HepG2 (cell line): ENCODE measurements at regions of chr4 and their contacts with region 1.

Region 1: GRCh38 chr4:7067452-7068278 is at the start of gene GRPEL1:
- DNase-seq: peak; percentile 99
- ATAC-seq: peak; percentile 94
- H3K4me3 ChIP-seq: peak within 1 kb of the TSS; percentile 79 to 97 (median 85)
- H3K27ac ChIP-seq: peak within 1 kb of the TSS; percentile 91
- H3K4me1 ChIP-seq: peaks cover 60% of the 10 kb centered on the region
- H3K27me3 ChIP-seq: no peaks in the 10 kb centered on the region; a peak in 1 of 5 replicates
- CTCF ChIP-seq: no peak
- EP300 ChIP-seq: 0 out of 4 replicates have a peak, but pooled peaks of 1 of the 2 experiments have one; percentile 13
- POLR2A ChIP-seq: peak in 1 of 2 experiments; percentile 99; a peak in 2 of 4 replicates
- RAD21 ChIP-seq: peak; percentile 19; the same call in 1 of the 2 replicates
- total RNA-seq, gene GRPEL1: 141 and 213 TPM in 2 replicates

Region 2: DNA sequence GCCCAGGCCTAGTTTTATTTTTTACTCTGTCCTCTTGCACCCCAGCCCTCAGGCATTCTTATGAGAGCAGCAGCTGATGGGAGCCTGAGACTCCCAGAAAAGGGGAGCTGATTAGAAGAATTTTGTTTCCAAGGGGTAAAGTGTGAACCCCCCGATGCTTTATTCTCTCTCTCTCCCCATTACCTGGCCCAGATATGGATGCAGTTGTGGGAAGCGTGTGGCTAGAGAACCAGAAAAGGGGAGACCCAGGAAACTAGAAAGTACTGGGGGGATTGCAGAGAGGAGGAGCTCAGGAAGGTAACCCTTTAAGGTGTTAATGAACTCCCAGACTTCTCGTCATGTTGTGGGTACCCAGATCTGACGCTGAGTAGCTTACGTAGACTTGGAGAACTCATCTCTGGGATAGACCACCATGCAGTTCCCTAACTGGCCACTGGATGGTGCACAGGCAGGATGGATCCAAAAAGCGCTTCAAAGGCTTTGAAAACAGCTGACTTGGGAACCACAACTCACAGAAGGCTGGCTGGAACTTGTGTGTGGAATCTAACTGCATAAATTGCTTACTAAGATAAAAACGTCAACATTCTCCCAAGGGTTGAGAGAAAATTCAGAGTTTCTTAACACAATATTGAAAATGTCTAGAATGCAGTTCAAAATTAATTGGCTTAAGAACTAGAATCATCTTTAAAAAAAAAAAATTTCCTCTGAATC is 93.4 kb before region 1 on chr4:
- CTCF ChIA-PET with region 1: interaction called, 6 read pairs
- POLR2A ChIA-PET with region 1: no interaction called
- in situ Hi-C with region 1: no loop called
- intact Hi-C with region 1: loop called (anchors 1 kb)
- DNase-seq: peak; percentile 81
- ATAC-seq: peak; percentile 94
- H3K4me3 ChIP-seq: no peak overlapping the region
- H3K27ac ChIP-seq: no peak overlapping the region
- H3K4me1 ChIP-seq: peaks cover 16% of the 10 kb centered on the region
- H3K27me3 ChIP-seq: no peaks in the 10 kb centered on the region
- CTCF ChIP-seq: peak; percentile 87
- EP300 ChIP-seq: no peak
- POLR2A ChIP-seq: no peak
- RAD21 ChIP-seq: peak; percentile 74

Region 3: GRCh38 chr4:6986781-6987587 is 80.7 kb before region 1 on chr4:
- CTCF ChIA-PET with region 1: no interaction called
- POLR2A ChIA-PET with region 1: interaction called, 7 read pairs
- in situ Hi-C with region 1: no loop called
- intact Hi-C with region 1: loop called (anchors 5 kb)
- DNase-seq: peak; percentile 81
- ATAC-seq: peak; percentile 84
- H3K4me3 ChIP-seq: peak overlapping the region; percentile 82 to 92 (median 88)
- H3K27ac ChIP-seq: peak overlapping the region; percentile 80
- H3K4me1 ChIP-seq: peaks cover 53% of the 10 kb centered on the region
- H3K27me3 ChIP-seq: no peaks in the 10 kb centered on the region; a peak in 1 of 5 replicates
- CTCF ChIP-seq: peak; percentile 23; the same call in 1 of the 2 replicates
- EP300 ChIP-seq: no peak; a peak in 1 of 4 replicates
- POLR2A ChIP-seq: peak; percentile 48 to 62; a peak in 2 of 4 replicates
- RAD21 ChIP-seq: no peak

Region 4: GRCh38 chr4:7034262-7035091 is 33.2 kb before region 1 on chr4:
- CTCF ChIA-PET with region 1: interaction called, 7 read pairs
- POLR2A ChIA-PET with region 1: interaction called, 21 read pairs
- in situ Hi-C with region 1: no loop called
- intact Hi-C with region 1: loop called (anchors 1 kb)
- DNase-seq: peak; percentile 91
- ATAC-seq: peak; percentile 91
- H3K4me3 ChIP-seq: peak overlapping the region; percentile 24 to 60 (median 34); a peak in 4 of 6 replicates
- H3K27ac ChIP-seq: peak overlapping the region; percentile 66
- H3K4me1 ChIP-seq: peaks cover 45% of the 10 kb centered on the region
- H3K27me3 ChIP-seq: no peaks in the 10 kb centered on the region
- CTCF ChIP-seq: peak; percentile 69
- EP300 ChIP-seq: 0 out of 4 replicates have a peak, but pooled peaks of 1 of the 2 experiments have one; percentile 9
- POLR2A ChIP-seq: peak in 1 of 2 experiments; percentile 67; a peak in 2 of 4 replicates
- RAD21 ChIP-seq: peak; percentile 43; the same call in 1 of the 2 replicates

Region 5: DNA sequence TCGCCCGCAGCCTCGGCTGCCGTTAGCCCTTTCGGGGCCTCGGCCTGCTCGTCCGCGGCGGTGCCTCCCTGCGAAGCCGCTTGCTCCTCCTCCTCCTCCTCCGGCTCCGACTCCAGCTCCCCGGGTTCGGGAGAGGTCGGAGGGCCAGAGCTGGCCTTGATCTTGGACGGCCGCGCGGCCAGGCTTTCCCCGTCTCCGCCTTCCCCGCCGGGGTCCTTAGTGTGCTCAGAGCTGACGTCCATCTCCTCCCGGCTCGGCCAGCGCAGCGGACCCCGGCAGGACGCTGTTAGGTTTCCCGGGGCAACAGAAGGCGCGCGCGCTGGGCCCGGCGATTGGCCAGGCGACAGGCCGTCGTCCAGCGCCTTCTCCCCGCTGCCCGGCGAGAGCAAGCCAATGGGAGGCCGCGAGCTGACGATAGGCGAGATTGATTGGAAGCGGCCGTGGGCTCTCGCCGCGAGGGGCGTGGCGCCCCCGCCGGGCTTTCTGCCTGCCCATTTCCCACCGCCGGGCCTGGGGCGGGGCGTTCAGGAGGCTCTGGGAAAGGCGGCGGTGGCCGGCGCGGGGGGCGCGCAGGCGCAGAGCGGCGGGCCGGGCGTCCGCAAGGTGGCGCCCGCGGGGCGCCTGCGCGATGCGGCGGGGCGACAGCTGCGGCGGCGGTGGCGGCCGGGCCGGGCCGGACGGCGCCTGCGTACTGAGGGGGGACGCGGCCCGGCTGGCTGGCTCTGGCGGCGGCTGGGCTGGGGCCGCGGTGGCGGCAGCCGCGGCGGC is 24.8 kb before region 1 on chr4 and contains the start of gene TADA2B:
- CTCF ChIA-PET with region 1: interaction called, 7 read pairs
- POLR2A ChIA-PET with region 1: interaction called, 64 read pairs
- in situ Hi-C with region 1: no loop called
- intact Hi-C with region 1: no loop called
- DNase-seq: peak; percentile 93
- ATAC-seq: peak; percentile 93
- H3K4me3 ChIP-seq: peak within 1 kb of the TSS; percentile 78 to 99 (median 96)
- H3K27ac ChIP-seq: peak within 1 kb of the TSS; percentile 77
- H3K4me1 ChIP-seq: peaks cover 45% of the 10 kb centered on the region
- H3K27me3 ChIP-seq: peaks cover 0 to 5% of the 10 kb centered on the region in 2 experiments; a peak in 1 of 5 replicates
- CTCF ChIP-seq: peak; percentile 45; the same call in 1 of the 2 replicates
- EP300 ChIP-seq: no peak
- POLR2A ChIP-seq: no peak
- RAD21 ChIP-seq: peak; percentile 53
- total RNA-seq, gene TADA2B: 8.6 and 8.9 TPM in 2 replicates

Region 6: GRCh38 chr4:7083597-7084563 is 16.2 kb after region 1 on chr4:
- CTCF ChIA-PET with region 1: no interaction called
- POLR2A ChIA-PET with region 1: interaction called, 10 read pairs
- in situ Hi-C with region 1: no loop called
- intact Hi-C with region 1: no loop called
- DNase-seq: no peak
- ATAC-seq: peak; percentile 68
- H3K4me3 ChIP-seq: peak overlapping the region; percentile 48 to 67 (median 53); a peak in 5 of 6 replicates
- H3K27ac ChIP-seq: no peak overlapping the region
- H3K4me1 ChIP-seq: peaks cover 7% of the 10 kb centered on the region; the same call in 1 of the 2 replicates
- H3K27me3 ChIP-seq: no peaks in the 10 kb centered on the region
- CTCF ChIP-seq: peak; percentile 30; the same call in 1 of the 2 replicates
- EP300 ChIP-seq: no peak
- POLR2A ChIP-seq: no peak
- RAD21 ChIP-seq: no peak

Region 7: GRCh38 chr4:7101692-7102515 is 34.2 kb after region 1 on chr4:
- CTCF ChIA-PET with region 1: no interaction called
- POLR2A ChIA-PET with region 1: interaction called, 13 read pairs
- in situ Hi-C with region 1: no loop called
- intact Hi-C with region 1: no loop called
- DNase-seq: peak; percentile 52
- ATAC-seq: peak; percentile 78
- H3K4me3 ChIP-seq: peak overlapping the region; percentile 80 to 88 (median 82); a peak in 5 of 6 replicates
- H3K27ac ChIP-seq: no peak overlapping the region
- H3K4me1 ChIP-seq: peaks cover 40% of the 10 kb centered on the region
- H3K27me3 ChIP-seq: peaks cover 0 to 12% of the 10 kb centered on the region in 2 experiments; a peak in 2 of 5 replicates
- CTCF ChIP-seq: peak; percentile 91
- EP300 ChIP-seq: no peak
- POLR2A ChIP-seq: no peak
- RAD21 ChIP-seq: peak; percentile 55; the same call in 1 of the 2 replicates